Right ventricle myocardium superior (tissue), 1 donor: ENCODE measurements at regions of chr21 and their contacts with region 1.

Region 1: DNA sequence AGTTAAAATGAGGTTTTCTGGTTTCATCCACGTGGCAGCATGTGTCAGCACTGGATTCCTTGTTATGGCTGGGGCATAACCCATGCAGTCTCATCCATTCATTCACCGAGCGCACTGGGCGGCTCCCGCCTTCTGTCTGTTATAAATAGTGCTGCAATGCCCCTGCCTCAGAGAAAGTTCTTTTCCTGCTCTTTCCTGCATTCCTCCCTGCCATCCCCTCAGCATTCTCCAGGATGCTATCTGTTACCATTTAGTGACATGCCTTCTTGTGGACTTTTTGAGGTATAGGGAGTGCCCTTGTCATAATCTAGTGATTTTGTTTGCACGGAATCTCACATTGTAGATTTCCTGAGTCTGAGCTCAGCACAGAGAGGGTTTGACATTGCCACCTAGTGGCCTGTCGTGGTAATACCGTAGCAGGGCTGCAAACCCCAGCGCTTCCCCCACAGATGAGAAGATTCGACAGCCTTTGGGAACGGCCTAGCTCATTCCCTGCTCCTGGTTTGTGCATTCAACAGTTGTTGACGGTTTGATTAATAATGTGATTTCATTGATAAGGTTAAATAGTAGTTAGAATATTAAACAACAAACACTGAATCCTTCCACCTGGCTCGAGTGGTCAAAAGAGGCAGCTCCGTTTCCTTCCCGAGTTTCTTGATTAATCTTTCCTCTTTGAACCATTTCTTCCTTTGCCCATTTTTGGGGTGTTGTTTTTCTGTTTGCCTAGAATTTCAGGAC is 46.3 kb downstream of the UMODL1 start:
- DNase-seq: peak; percentile 76
- ATAC-seq: peak; percentile 91

Region 2: GRCh38 chr21:41612674-41613532 is 504.5 kb before region 1 on chr21:
- intact Hi-C with region 1: loop called (anchors 10 kb)
- DNase-seq: peak; percentile 84
- ATAC-seq: peak; percentile 93

Region 3: GRCh38 chr21:41816220-41817165 is 300.9 kb before region 1 on chr21:
- intact Hi-C with region 1: loop called (anchors 2 kb)
- DNase-seq: peak; percentile 70
- ATAC-seq: peak; percentile 93

Region 4: DNA sequence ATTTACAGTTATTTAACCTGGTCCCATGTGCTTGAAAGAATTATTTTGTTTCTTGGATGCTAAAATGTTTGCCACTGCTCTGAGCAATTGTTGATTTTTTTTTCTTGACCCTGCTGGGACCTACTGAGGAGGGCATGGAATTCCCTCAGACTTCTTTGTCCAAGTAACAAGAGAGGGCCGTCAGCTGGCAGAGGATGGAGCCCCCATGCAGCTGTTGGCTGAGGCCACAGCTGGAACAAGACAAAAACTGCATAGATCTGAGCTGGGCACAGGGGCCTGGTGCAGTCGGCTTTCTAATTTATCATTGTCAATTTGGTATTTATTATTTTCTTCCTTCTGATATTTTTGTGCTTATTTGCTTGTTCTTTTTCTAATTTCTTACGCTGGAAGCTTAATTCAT is 61.9 kb after region 1 on chr21:
- intact Hi-C with region 1: no loop called
- DNase-seq: no peak
- ATAC-seq: no peak

Region 5: DNA sequence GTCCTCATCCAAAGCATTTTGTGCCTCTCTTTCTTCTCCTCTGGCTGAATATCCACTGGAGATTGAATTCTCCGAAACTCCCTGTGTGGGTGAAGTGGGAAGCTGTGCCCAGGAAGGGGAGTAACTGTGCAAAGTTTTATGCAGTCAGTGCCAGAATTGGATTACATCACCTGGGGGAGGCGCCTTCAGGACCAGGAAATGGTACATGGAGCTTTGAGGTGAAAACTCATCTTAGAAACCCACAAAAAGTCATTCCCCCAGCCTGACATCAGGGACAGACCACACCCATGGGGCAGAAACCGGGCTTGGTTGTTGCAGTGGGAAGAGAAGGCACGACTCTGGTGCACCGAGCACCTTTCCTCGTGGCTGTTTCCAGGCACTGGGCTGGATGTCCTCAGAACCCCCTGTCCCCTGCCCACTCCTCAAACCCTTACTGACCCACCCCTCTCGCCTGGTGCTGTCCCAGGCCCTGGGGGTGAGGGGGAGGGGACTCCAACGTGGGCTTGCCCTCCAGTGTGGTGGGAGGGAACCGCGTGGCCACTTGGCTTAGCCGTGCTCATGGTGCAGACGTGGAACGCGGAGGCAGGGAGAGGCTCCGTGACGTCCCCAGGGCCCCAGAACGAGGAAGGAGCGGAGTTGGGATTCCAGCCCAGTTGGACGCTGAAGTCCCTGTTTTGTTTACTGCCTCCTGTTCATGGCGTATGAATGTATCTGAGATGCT is 182.1 kb after region 1 on chr21:
- intact Hi-C with region 1: no loop called
- DNase-seq: peak; percentile 76
- ATAC-seq: peak; percentile 31